AG04450 (cell line): ENCODE measurements at regions of chr10 and their contacts with region 1.

Region 1: GRCh38 chr10:58414270-58415041 is 29.2 kb downstream of the TFAM start:
- DNase-seq: peak; percentile 50
- H3K4me3 ChIP-seq: no peak overlapping the region
- H3K27ac ChIP-seq: no peak overlapping the region
- H3K27me3 ChIP-seq: no peaks in the 10 kb centered on the region
- CTCF ChIP-seq: peak; percentile 64

Region 2: DNA sequence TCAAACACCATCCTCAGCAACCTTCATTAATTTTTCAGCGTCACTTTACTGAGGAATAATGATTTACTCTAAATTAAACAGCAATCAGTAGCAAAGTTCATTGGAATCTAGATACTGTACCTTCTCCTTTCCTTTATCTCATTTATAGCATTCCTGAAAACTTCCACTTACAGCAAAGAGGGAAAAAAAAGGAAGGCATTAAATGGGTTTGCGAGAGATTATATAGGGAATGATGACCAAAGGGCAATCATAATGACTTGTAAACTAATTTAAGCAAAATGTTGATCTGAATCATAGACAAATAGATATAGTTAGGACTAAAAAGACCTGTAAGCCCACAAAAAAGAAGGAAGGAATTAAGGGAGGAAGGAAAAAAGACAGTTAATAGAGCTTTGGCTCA is 188.8 kb before region 1 on chr10:
- CTCF ChIA-PET with region 1: no interaction called
- POLR2A ChIA-PET with region 1: no interaction called
- DNase-seq: no peak
- H3K4me3 ChIP-seq: no peak overlapping the region
- H3K27ac ChIP-seq: no peak overlapping the region
- H3K27me3 ChIP-seq: no peaks in the 10 kb centered on the region
- CTCF ChIP-seq: no peak

Region 3: DNA sequence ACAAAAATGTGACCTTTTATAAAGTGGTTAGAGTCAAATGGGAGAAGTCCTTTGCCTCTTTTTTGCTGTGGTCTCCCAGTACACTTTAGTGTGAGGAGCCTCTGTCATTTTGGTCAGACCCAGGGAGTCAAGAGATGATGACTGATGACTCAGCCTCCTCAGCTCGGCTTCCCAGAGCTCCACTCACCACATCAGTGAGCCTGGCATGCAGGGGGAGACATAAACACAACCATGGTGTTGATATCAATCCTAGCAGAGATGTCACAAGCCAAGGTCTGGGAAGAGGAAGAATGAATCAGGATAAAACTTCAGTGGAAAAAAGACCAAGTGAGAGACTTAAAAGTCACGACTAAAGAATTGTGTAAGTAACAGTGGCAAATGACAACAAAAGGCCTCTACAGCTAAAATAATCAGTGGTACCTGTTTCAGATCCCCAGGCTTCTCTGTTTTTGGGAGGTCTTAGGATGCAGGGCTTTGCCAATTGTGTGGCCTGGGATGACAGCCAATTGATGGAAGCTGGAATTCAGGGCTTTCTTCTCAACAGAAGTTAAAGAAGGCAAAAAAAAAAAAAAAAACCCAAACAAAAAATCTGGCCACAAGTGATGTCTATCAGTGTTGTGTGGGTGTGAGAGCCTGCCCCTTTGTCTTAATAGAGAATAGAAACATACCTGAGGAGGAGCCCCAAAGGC is 21.0 kb after region 1 on chr10:
- CTCF ChIA-PET with region 1: interaction called, 17 read pairs
- POLR2A ChIA-PET with region 1: no interaction called
- DNase-seq: peak; percentile 87
- H3K4me3 ChIP-seq: no peak overlapping the region
- H3K27ac ChIP-seq: peak overlapping the region; percentile 87
- H3K27me3 ChIP-seq: no peaks in the 10 kb centered on the region
- CTCF ChIP-seq: no peak

Region 4: GRCh38 chr10:58531084-58531695 is 116.7 kb after region 1 on chr10:
- CTCF ChIA-PET with region 1: interaction called, 43 read pairs
- POLR2A ChIA-PET with region 1: no interaction called
- DNase-seq: no peak
- H3K4me3 ChIP-seq: no peak overlapping the region
- H3K27ac ChIP-seq: no peak overlapping the region
- H3K27me3 ChIP-seq: no peaks in the 10 kb centered on the region
- CTCF ChIP-seq: peak; percentile 85

Region 5: GRCh38 chr10:58651040-58651439 is 236.6 kb after region 1 on chr10:
- CTCF ChIA-PET with region 1: no interaction called
- POLR2A ChIA-PET with region 1: no interaction called
- DNase-seq: no peak
- H3K4me3 ChIP-seq: no peak overlapping the region
- H3K27ac ChIP-seq: no peak overlapping the region
- H3K27me3 ChIP-seq: no peaks in the 10 kb centered on the region
- CTCF ChIP-seq: no peak

Region 6: GRCh38 chr10:58755677-58756076 is 341.2 kb after region 1 on chr10:
- CTCF ChIA-PET with region 1: interaction called, 12 read pairs
- POLR2A ChIA-PET with region 1: no interaction called
- DNase-seq: peak; percentile 10
- H3K4me3 ChIP-seq: peak overlapping the region; percentile 17
- H3K27ac ChIP-seq: peak overlapping the region; percentile 75
- H3K27me3 ChIP-seq: no peaks in the 10 kb centered on the region
- CTCF ChIP-seq: no peak

Region 7: GRCh38 chr10:58781873-58782488 is 367.5 kb after region 1 on chr10:
- CTCF ChIA-PET with region 1: interaction called, 31 read pairs
- POLR2A ChIA-PET with region 1: interaction called, 3 read pairs
- DNase-seq: no peak
- H3K4me3 ChIP-seq: no peak overlapping the region
- H3K27ac ChIP-seq: no peak overlapping the region
- H3K27me3 ChIP-seq: no peaks in the 10 kb centered on the region
- CTCF ChIP-seq: peak; percentile 58